MCF 10A (cell line): ENCODE measurements at regions of chr19 and their contacts with region 1.

Region 1: GRCh38 chr19:15091901-15092753 is 10.1 kb downstream of the OR1I1 start:
- DNase-seq: peak; percentile 74
- H3K4me3 Mint-ChIP-seq: no peak overlapping the region
- H3K27ac Mint-ChIP-seq: no peak overlapping the region
- H3K4me1 Mint-ChIP-seq: no peaks in the 10 kb centered on the region
- H3K27me3 Mint-ChIP-seq: peaks cover 14% of the 10 kb centered on the region
- CTCF ChIP-seq: peak; percentile 64

Region 2: DNA sequence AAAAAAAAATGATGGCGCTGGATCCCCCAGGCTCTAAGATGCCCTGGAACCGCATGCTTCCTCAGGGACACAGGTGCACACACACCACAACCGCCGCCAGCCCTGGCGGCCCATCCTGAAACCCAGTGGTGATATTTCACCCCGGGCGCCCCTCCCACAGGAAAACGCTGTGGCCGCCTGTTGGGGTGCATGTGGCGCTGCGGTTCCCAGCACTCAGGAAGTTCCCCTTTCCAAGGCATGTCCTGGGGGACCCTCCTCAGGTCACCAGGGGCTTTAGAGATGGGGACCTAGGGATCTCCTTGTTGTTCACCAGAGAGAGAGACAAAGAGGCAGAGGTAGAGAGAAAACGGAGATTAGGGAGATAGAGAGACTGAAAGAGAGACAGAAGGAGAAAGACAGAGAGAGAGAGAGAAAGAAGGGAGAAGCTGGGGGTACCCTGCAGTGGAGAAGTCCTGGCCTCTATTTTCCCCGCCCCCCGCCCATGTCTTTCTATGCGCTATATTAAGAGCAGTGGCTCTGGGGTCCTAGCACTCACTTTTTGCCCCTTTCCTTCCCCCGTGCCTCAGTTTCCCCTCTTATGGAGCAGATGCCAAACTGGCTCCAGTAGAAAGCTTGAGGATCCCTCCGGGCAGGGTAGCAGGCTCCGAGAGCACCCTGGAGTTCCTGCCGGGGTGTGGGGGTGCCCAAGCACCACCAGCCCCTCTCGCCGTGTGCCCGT is 316.1 kb before region 1 on chr19:
- CTCF ChIA-PET with region 1: no interaction called
- POLR2A ChIA-PET with region 1: no interaction called
- intact Hi-C with region 1: no loop called
- DNase-seq: peak; percentile 3
- H3K4me3 Mint-ChIP-seq: peak overlapping the region; percentile 74
- H3K27ac Mint-ChIP-seq: peak overlapping the region; percentile 53
- H3K4me1 Mint-ChIP-seq: peaks cover 6% of the 10 kb centered on the region
- H3K27me3 Mint-ChIP-seq: no peaks in the 10 kb centered on the region
- CTCF ChIP-seq: no peak

Region 3: DNA sequence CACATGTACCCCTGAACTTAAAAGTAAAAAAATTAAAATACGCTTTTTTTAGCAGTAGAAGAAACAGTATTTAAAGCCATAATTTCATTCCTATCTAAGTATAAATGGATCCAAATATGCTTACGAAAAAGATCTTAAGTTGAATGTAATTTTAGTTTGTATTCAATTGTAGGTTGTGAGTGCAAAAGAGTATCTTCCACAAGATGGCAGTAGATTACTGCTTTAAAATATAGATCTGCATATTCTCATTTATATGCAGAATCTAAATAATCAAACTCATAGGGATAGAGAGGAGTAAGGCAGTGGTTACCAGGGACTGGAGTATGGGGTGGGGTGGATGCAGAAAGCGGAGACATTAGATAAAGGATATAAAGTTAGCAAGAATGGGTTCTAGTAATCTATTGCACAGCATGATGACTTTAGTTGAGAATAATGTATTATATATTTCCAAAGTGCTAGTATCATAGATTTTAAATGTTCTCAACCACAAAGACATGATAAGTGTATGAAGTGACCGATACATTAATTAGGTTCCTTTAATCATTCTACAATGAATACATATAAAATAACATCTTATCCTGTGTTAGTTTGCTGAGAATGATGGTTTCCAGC is 220.4 kb before region 1 on chr19:
- CTCF ChIA-PET with region 1: no interaction called
- POLR2A ChIA-PET with region 1: no interaction called
- intact Hi-C with region 1: loop called (anchors 10 kb)
- DNase-seq: peak; percentile 20
- H3K4me3 Mint-ChIP-seq: no peak overlapping the region
- H3K27ac Mint-ChIP-seq: no peak overlapping the region
- H3K4me1 Mint-ChIP-seq: no peaks in the 10 kb centered on the region
- H3K27me3 Mint-ChIP-seq: peaks cover 40% of the 10 kb centered on the region
- CTCF ChIP-seq: peak; percentile 49

Region 4: GRCh38 chr19:15062036-15062435 is 30.1 kb before region 1 on chr19:
- CTCF ChIA-PET with region 1: no interaction called
- POLR2A ChIA-PET with region 1: no interaction called
- intact Hi-C with region 1: no loop called
- DNase-seq: no peak
- H3K4me3 Mint-ChIP-seq: no peak overlapping the region
- H3K27ac Mint-ChIP-seq: no peak overlapping the region
- H3K4me1 Mint-ChIP-seq: no peaks in the 10 kb centered on the region
- H3K27me3 Mint-ChIP-seq: peaks cover 12% of the 10 kb centered on the region
- CTCF ChIP-seq: no peak

Region 5: DNA sequence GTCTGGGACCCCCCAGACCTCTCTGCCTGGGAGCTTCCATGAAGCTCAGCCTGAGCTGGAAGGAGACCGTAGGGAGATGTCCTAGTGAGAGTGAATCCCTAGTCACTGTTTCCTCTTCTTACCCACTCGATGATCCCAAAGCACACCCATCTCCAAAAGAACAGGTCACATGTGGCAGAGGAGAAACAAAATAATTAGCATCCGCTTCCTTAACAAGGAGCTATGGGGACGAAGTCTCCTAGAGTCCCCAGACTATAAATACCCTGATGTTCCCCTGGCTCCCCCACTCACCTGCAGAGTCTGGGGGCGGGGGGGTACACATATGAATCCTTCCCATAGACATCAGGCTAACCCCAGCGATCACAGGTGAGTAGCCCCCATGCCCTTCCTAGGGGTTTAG is 10.2 kb before region 1 on chr19 and contains the start of gene OR1I1:
- CTCF ChIA-PET with region 1: interaction called, 29 read pairs
- POLR2A ChIA-PET with region 1: no interaction called
- intact Hi-C with region 1: no loop called
- DNase-seq: no peak
- H3K4me3 Mint-ChIP-seq: no peak within 1 kb of the TSS
- H3K27ac Mint-ChIP-seq: no peak within 1 kb of the TSS
- H3K4me1 Mint-ChIP-seq: no peaks in the 10 kb centered on the region
- H3K27me3 Mint-ChIP-seq: peaks cover 17% of the 10 kb centered on the region
- CTCF ChIP-seq: no peak
- total RNA-seq, gene OR1I1: not detected in 2 replicates

Region 6: DNA sequence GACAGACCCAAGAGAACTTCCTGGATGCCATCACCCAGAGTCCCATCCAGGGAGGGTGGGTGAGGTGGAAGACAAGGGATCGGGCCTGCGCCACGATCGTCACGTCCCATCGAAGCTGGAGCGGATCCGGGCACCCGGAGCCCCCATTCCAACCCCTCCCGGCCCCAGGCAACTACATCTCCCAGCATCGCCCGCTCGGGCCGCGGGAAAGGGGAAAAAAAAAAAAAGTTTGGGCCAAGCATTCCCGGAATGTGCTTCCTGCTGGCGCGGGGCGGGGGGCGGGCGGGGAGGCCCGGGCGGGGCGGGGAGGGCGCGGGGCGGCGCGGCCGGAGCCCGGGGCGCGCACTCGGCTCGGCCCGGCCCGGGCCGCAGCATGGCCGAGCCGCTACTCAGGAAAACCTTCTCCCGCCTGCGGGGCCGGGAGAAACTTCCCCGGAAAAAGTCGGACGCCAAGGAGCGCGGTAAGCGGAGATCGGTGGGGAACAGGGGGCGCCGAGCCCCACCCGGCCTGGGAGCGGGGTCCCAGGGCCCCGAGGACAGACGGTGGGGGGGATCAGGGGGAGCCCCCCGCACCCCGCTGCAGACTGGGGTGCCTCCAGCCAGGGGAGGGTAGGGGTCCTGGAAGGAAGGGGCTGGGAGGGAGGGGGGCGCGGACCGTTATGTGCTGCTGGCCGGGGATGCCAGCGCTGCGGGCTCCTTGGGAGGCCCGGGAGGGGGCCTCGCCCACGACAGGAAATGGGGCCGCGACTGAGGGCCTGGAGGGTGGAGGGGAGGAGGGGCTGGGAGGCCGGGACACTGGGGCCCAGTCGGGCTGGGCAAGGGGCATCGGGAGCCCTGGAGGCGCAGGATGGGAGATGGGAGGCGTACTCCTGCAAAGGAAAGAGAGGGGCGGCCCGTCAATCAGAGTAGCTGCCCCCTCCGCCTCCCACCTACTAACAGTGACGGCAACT is 15.2 kb after region 1 on chr19 and contains the start of gene SYDE1:
- CTCF ChIA-PET with region 1: interaction called, 26 read pairs
- POLR2A ChIA-PET with region 1: no interaction called
- intact Hi-C with region 1: no loop called
- DNase-seq: peak; percentile 46
- H3K4me3 Mint-ChIP-seq: peak within 1 kb of the TSS; percentile 78
- H3K27ac Mint-ChIP-seq: peak within 1 kb of the TSS; percentile 88
- H3K4me1 Mint-ChIP-seq: peaks cover 15% of the 10 kb centered on the region
- H3K27me3 Mint-ChIP-seq: no peaks in the 10 kb centered on the region
- CTCF ChIP-seq: no peak
- total RNA-seq, gene SYDE1: 22.6 and 24.2 TPM in 2 replicates

Region 7: GRCh38 chr19:15154002-15154612 is 62.0 kb after region 1 on chr19:
- CTCF ChIA-PET with region 1: interaction called, 38 read pairs
- POLR2A ChIA-PET with region 1: interaction called, 6 read pairs
- intact Hi-C with region 1: loop called (anchors 1 kb)
- DNase-seq: peak; percentile 58
- H3K4me3 Mint-ChIP-seq: no peak overlapping the region
- H3K27ac Mint-ChIP-seq: no peak overlapping the region
- H3K4me1 Mint-ChIP-seq: peaks cover 6% of the 10 kb centered on the region
- H3K27me3 Mint-ChIP-seq: peaks cover 24% of the 10 kb centered on the region
- CTCF ChIP-seq: peak; percentile 45

Region 8: GRCh38 chr19:15555759-15556633 is 463.9 kb after region 1 on chr19:
- CTCF ChIA-PET with region 1: interaction called, 7 read pairs
- POLR2A ChIA-PET with region 1: no interaction called
- intact Hi-C with region 1: loop called (anchors 1 kb)
- DNase-seq: peak; percentile 90
- H3K4me3 Mint-ChIP-seq: peak overlapping the region; percentile 60
- H3K27ac Mint-ChIP-seq: no peak overlapping the region
- H3K4me1 Mint-ChIP-seq: peaks cover 11% of the 10 kb centered on the region
- H3K27me3 Mint-ChIP-seq: no peaks in the 10 kb centered on the region
- CTCF ChIP-seq: peak; percentile 81